Heart left ventricle (tissue), 16 donors: ENCODE measurements at regions of chr3 and their contacts with region 1.

Region 1: DNA sequence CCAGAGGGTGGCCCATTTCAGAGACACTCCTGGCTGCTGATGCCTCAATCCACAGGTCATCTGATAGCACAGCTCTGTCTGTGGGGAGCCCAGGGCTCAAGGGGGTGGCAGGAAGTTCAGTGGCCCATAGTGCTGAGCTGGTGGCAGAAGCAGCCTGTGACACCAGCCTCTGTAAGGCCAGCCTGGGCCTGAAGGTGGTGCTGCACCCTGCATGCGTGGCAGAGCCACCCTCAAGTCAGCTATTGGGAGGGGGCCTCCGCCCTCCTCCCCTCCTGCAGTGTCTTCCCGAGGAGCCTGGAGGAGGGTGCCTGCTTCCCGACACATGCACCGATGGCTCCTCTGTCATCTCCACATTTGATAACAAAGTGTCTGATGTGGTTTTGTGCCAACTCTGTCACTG is 3.0 kb downstream of the PLA1A start:
- DNase-seq: peak; percentile 35 to 66 (median 53)
- ATAC-seq: peak; percentile 72 to 84 (median 82)
- H3K4me3 ChIP-seq: no peak overlapping the region
- H3K27ac ChIP-seq: peak overlapping the region in 9 of 12 donors; percentile 15 to 85 (median 54)
- H3K4me1 ChIP-seq: peaks cover 3 to 80% (median 55%) of the 10 kb centered on the region in 12 donors
- H3K27me3 ChIP-seq: no peaks in the 10 kb centered on the region
- CTCF ChIP-seq: peak; percentile 36 to 69 (median 56)
- POLR2A ChIP-seq: no peak

Region 2: DNA sequence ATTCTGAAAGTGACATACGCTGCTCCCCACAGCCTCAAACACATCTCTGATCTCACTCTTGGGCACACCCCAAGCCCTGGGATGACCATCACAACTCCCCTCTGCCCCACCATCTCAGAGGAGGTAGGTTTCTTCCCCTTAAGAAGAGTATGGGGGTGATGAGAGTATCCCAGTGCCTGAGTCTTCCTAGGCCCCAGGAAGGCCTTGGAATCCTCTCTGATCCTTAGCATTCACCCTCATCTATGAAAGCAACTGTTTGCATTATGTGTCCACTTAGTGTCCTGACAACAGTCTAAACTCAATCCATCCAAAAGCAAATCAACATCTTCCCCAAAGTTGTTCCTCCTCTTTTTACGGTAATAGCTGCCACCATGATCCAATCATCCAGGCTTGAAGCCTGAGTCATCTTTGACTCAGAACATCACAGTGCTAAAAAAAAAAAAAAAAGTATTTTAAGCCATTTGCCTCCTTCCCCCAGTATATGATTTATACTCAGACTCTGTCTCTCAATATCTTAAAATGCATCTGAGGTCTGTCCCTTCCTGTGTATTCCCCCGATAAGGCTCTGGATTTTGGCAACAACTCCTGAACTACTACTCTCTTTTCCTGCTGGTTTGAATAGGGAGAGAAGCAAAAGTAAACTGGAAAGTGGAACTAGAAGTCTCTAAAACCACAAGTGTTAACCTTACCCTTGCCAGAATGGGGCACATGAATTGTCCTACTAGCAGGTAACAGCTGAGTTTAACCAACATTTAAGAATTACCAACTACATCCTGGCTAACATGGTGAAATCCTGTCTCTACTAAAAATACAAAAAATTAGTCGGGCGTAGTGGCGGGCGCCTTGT is 37.2 kb after region 1 on chr3:
- intact Hi-C with region 1: loop called in 6 of 10 experiments (anchors 2 to 5 kb)
- DNase-seq: no peak
- ATAC-seq: peak; percentile 18 to 69 (median 29)
- H3K4me3 ChIP-seq: peak overlapping the region in 4 of 12 donors; percentile 4 to 12 (median 7)
- H3K27ac ChIP-seq: peak overlapping the region; percentile 69 to 97 (median 85)
- H3K4me1 ChIP-seq: peaks cover 3 to 73% (median 46%) of the 10 kb centered on the region in 12 donors
- H3K27me3 ChIP-seq: no peaks in the 10 kb centered on the region
- CTCF ChIP-seq: no peak
- POLR2A ChIP-seq: no peak

Region 3: DNA sequence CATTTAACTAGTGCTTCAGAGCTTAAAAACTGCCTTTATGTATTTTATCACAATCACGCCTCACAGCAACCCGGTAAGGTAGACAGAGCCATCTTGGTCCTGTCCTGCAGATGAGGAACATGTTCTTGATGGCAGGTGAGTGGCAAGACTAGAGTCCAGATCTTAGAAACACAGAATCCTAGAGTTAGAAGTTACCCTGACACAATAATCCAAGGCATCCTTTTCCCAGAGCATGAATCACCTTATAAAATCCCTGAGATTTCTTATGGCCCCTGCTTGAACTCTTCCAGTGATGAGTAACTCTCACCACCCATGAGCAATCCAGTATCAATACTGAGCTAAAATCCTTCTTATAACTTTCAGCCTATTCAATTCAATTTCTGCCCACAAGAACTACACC is 42.8 kb after region 1 on chr3:
- intact Hi-C with region 1: loop called in 5 of 10 experiments (anchors 5 kb)
- DNase-seq: no peak
- ATAC-seq: no peak
- H3K4me3 ChIP-seq: no peak overlapping the region
- H3K27ac ChIP-seq: peak overlapping the region in 9 of 12 donors; percentile 8 to 99 (median 95)
- H3K4me1 ChIP-seq: peaks cover 5 to 94% (median 55%) of the 10 kb centered on the region in 12 donors
- H3K27me3 ChIP-seq: no peaks in the 10 kb centered on the region
- CTCF ChIP-seq: no peak
- POLR2A ChIP-seq: no peak

Region 4: GRCh38 chr3:119657887-119658702 is 57.4 kb after region 1 on chr3:
- intact Hi-C with region 1: no loop called
- DNase-seq: no peak
- ATAC-seq: no peak
- H3K4me3 ChIP-seq: peak overlapping the region; percentile 29 to 75 (median 60)
- H3K27ac ChIP-seq: peak overlapping the region; percentile 87 to 99 (median 96)
- H3K4me1 ChIP-seq: peaks cover 0 to 61% (median 30%) of the 10 kb centered on the region in 12 donors
- H3K27me3 ChIP-seq: no peaks in the 10 kb centered on the region
- CTCF ChIP-seq: no peak
- POLR2A ChIP-seq: no peak